Sigmoid colon (tissue), 7 donors: ENCODE measurements at regions of chr2 and their contacts with region 1.

Region 1: DNA sequence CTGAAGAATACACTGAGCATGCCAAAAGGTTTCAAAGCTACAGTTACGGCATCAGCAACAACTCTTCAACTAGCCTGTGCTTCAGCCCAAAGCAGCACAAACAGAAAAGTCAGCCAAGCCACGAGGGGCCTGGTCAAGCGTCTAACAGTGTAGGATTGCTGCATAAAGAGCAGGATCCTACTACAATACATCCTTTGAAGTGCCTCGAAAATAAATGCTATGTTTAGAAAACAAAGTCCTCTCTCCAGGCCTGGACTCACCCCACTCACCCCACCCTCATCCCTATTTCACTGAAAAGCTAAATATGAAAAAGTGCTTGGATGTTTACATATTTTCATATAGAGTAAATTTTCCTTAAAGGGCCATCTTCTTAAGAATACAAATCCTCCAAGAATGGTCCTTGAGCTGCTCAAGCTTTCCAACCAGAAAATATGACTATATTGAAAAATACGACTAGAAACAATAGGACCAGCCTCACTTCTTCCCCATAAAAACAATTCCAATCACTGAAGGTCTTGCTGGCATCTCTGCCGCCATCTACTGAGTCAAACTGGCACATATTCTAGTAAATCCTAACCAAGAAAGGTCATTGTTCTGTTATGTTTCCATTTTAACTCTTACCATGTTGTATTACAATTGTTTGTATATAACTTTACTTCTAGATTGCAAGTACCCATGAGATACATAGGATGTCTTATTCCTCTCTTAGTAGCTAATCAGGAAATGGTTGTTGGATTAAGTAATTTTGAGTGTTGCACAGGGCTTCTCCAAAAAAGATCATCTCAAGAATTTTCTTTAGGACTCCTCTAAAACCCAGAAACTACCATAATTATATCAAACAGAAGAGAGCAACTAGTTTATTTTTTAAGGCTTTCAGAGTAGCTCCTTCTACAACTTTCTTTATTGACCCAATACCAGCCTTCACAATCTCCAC is 63.6 kb downstream of the CLHC1 start:
- DNase-seq: peak; percentile 85
- H3K4me3 ChIP-seq: no peak overlapping the region
- H3K27ac ChIP-seq: peak overlapping the region; percentile 58 to 77 (median 73)
- H3K4me1 ChIP-seq: peaks cover 0 to 55% (median 23%) of the 10 kb centered on the region in 4 donors
- H3K27me3 ChIP-seq: no peaks in the 10 kb centered on the region
- CTCF ChIP-seq: peak; percentile 66 to 81 (median 74)
- EP300 ChIP-seq: no peak
- POLR2A ChIP-seq: no peak

Region 2: GRCh38 chr2:55014962-55015939 is 153.2 kb before region 1 on chr2:
- intact Hi-C with region 1: loop called (anchors 2 kb)
- DNase-seq: peak; percentile 69
- H3K4me3 ChIP-seq: no peak overlapping the region
- H3K27ac ChIP-seq: peak overlapping the region in 3 of 4 donors; percentile 8 to 42 (median 40)
- H3K4me1 ChIP-seq: peaks cover 0 to 81% (median 65%) of the 10 kb centered on the region in 4 donors
- H3K27me3 ChIP-seq: no peaks in the 10 kb centered on the region
- CTCF ChIP-seq: peak; percentile 57 to 62 (median 61)
- EP300 ChIP-seq: no peak
- POLR2A ChIP-seq: no peak

Region 3: GRCh38 chr2:55357927-55358326 is 189.4 kb after region 1 on chr2:
- intact Hi-C with region 1: no loop called
- DNase-seq: no peak
- H3K4me3 ChIP-seq: no peak overlapping the region
- H3K27ac ChIP-seq: no peak overlapping the region
- H3K4me1 ChIP-seq: no peaks in the 10 kb centered on the region
- H3K27me3 ChIP-seq: no peaks in the 10 kb centered on the region
- CTCF ChIP-seq: no peak
- EP300 ChIP-seq: no peak
- POLR2A ChIP-seq: no peak